Thyroid gland (tissue), 4 donors: ENCODE measurements at regions of chr3 and their contacts with region 1.

Region 1: GRCh38 chr3:49411968-49412631 is at the starts of genes RHOA and TCTA:
- DNase-seq: peak; percentile 99
- H3K4me3 ChIP-seq: peak within 1 kb of the TSS; percentile 45 to 91 (median 68)
- H3K27ac ChIP-seq: peak within 1 kb of the TSS; percentile 89 to 95 (median 92)
- H3K4me1 ChIP-seq: peaks cover 43 to 50% of the 10 kb centered on the region in 2 donors
- H3K27me3 ChIP-seq: no peaks in the 10 kb centered on the region
- CTCF ChIP-seq: peak in 1 of 6 experiments; percentile 11
- POLR2A ChIP-seq: peak; percentile 66 to 94
- total RNA-seq, gene RHOA: 437 to 789 (median 587) TPM
- total RNA-seq, gene TCTA: 50.4 to 177 (median 94.8) TPM

Region 2: GRCh38 chr3:49358217-49358883 is 53.8 kb before region 1 on chr3 and contains the start of gene GPX1:
- intact Hi-C with region 1: loop called (anchors 5 kb)
- DNase-seq: peak; percentile 98
- H3K4me3 ChIP-seq: peak within 1 kb of the TSS; percentile 7 to 76 (median 61)
- H3K27ac ChIP-seq: peak within 1 kb of the TSS; percentile 68 to 89 (median 83)
- H3K4me1 ChIP-seq: peaks cover 10 to 27% of the 10 kb centered on the region in 2 donors
- H3K27me3 ChIP-seq: no peaks in the 10 kb centered on the region
- CTCF ChIP-seq: peak in 1 of 6 experiments; percentile 22
- POLR2A ChIP-seq: peak; percentile 77 to 98
- total RNA-seq, gene GPX1: 161 to 398 (median 226) TPM

Region 3: GRCh38 chr3:49454458-49454857 is 42.4 kb after region 1 on chr3:
- intact Hi-C with region 1: loop called (anchors 2 kb)
- DNase-seq: peak; percentile 73 to 76
- H3K4me3 ChIP-seq: no peak overlapping the region
- H3K27ac ChIP-seq: no peak overlapping the region
- H3K4me1 ChIP-seq: peaks cover 9% of the 10 kb centered on the region in 2 donors
- H3K27me3 ChIP-seq: no peaks in the 10 kb centered on the region
- CTCF ChIP-seq: peak in 4 of 6 experiments; percentile 16 to 64 (median 44)
- POLR2A ChIP-seq: no peak